ENCODE measurements at regions of chr4 and their contacts with region 1.

Region 1: DNA sequence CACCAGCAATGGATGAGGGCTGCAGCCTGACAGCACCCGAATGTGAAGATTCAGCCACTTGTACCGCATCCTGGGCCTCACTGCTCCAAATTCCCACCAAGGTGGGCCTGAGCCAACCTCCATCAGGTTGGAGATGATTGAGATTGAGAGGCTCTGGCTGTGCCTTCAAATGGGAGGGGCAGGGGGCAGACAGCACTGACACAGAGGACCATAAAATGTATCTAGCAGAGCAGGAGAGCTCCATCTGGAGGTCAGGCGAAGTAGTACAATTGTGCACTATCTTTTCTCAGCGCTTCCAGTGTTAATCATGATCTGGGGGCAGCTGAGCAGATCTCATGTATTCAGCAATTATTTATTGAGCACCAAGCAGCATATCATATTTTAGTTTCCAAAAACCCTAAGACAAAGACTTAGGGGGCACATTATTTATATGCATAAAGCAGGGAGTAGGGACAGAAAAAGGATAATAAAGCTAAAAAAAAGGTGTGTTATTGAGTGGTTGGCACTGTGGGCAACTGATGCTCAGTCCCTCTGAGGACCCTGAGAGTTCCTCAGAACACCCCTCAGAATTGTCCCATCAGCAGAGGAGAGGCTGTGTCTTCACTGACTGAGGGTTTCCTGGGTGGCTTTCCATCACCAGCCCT is 31.6 kb upstream of the C1QTNF7 start:
- DNase-seq: peak; percentile 67
- H3K4me3 Mint-ChIP-seq: no peak overlapping the region
- H3K27ac Mint-ChIP-seq: no peak overlapping the region
- H3K4me1 Mint-ChIP-seq: peaks cover 17% of the 10 kb centered on the region
- H3K27me3 Mint-ChIP-seq: no peaks in the 10 kb centered on the region

Region 2: DNA sequence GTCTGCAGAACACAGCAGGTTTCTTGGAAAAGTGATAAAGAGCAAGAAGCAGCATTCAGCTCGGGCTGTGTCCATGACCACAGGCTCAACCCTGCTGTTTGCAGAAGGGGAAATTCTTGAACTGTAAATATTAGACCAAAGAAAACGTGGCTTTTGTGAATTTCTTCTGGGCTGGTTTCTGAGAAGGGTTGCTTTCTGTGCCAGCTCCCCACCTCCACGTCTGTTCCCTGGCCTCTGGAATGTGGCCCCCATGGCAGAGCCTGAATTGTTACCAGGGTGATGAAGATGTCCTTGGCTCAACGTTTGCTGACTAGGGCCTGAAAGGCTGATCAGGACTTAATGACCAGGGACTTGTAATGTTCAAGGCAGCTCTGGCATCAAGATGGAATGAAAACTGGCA is 278.0 kb before region 1 on chr4:
- CTCF ChIA-PET with region 1: no interaction called
- POLR2A ChIA-PET with region 1: no interaction called
- intact Hi-C with region 1: no loop called
- DNase-seq: no peak
- H3K4me3 Mint-ChIP-seq: no peak overlapping the region
- H3K27ac Mint-ChIP-seq: no peak overlapping the region
- H3K4me1 Mint-ChIP-seq: peaks cover 10% of the 10 kb centered on the region
- H3K27me3 Mint-ChIP-seq: peaks cover 19% of the 10 kb centered on the region

Region 3: DNA sequence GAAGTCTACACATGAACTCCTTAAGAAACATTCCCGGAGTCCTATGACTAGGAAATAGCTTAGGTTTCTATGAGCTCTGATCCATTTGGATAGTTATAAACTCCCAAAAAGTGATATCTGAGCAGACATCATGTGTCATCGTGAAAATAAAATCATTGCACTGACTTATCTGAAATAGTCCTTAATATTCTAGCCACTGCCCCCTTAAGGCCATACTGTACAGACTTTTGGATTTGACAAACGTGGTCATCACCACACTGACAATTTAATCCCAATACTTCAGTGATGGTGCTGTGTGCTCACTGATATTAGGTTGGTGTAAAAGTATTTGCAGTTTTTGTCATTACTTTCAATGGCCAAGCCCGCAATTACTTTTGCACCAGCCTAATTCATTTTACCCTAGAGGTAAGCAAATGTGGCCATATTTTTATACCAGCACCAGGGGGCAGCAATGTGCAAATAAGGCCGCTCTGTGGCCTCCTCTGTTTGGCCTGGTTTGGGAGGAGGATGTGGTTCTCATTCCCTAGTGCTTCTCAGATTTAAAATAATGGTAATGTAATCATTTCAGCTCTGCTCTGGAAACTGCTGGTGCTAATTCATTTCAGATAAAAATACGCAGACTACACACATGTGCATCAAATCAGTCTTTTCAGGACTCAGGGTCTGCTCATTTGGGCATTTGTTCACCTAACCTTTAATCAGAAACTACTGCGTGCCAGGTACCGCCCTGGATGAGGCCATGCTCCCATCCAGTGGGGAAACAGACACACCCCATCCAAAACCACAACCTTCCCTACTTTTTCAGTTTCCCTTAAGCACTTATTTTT is 164.8 kb before region 1 on chr4:
- CTCF ChIA-PET with region 1: interaction called, 48 read pairs
- POLR2A ChIA-PET with region 1: no interaction called
- intact Hi-C with region 1: loop called (anchors 1 kb)
- DNase-seq: peak; percentile 81
- H3K4me3 Mint-ChIP-seq: no peak overlapping the region
- H3K27ac Mint-ChIP-seq: no peak overlapping the region
- H3K4me1 Mint-ChIP-seq: peaks cover 28% of the 10 kb centered on the region
- H3K27me3 Mint-ChIP-seq: no peaks in the 10 kb centered on the region

Region 4: GRCh38 chr4:15354371-15355297 is 41.6 kb before region 1 on chr4:
- CTCF ChIA-PET with region 1: interaction called, 10 read pairs
- POLR2A ChIA-PET with region 1: no interaction called
- intact Hi-C with region 1: no loop called
- DNase-seq: no peak
- H3K4me3 Mint-ChIP-seq: no peak overlapping the region
- H3K27ac Mint-ChIP-seq: no peak overlapping the region
- H3K4me1 Mint-ChIP-seq: no peaks in the 10 kb centered on the region
- H3K27me3 Mint-ChIP-seq: peaks cover 2% of the 10 kb centered on the region

Region 5: DNA sequence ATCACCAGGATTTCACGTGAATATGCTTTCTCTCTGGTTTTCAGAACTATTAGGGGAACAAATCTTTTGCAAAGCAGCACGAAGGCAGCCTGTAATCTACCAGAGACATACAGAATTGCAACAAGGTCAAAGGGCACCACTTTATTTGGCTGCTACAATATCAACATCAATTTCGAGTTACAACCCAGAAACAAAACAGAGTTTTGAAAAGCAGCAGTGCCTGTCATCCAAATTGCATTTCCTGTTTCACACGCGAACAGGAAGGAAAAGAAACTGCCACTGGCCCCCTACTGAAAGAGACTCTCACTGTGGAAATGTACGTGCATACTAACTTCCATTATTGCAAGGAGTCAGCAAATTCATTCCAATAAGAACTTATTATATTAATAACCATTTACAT is 14.5 kb after region 1 on chr4:
- CTCF ChIA-PET with region 1: interaction called, 31 read pairs
- POLR2A ChIA-PET with region 1: no interaction called
- intact Hi-C with region 1: loop called (anchors 1 kb)
- DNase-seq: peak; percentile 25
- H3K4me3 Mint-ChIP-seq: no peak overlapping the region
- H3K27ac Mint-ChIP-seq: no peak overlapping the region
- H3K4me1 Mint-ChIP-seq: peaks cover 29% of the 10 kb centered on the region
- H3K27me3 Mint-ChIP-seq: no peaks in the 10 kb centered on the region

Region 6: DNA sequence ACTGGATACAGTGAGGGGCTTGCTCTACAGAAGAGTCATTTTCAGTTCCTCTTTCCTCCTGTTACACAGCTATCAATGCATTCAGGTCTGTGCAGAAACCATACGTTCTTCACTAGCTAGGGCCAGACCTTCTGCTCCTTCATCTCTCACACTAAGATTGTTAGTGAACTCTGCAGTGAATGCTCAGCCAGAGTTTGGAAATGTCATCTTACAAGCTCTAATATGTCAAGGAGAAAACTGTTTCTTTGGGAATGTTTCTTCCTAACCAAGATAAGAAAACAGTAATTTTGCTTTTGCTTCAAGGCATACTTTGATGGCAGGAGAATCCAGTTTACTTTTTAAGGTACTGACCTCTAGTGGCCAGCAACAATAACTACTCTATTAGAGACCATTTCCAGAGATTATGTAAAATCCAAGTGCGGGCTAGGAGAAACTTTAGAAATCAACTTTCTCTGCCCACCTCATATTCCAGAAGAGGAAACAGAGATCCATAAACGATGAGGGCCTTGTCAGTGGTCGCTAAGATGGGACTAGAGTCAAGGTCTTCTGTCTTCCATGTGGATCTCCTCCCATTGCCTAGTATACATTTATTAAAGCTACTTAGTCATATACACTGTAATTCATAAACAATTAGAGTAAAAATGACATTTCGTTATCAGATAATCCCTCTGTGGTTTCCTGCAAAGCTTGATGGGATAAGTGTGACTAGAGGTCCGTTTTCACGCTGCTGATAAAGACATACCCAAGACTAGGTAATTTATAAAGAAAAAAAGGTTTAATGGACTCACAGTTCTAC is 61.3 kb after region 1 on chr4:
- CTCF ChIA-PET with region 1: interaction called, 20 read pairs
- POLR2A ChIA-PET with region 1: no interaction called
- intact Hi-C with region 1: loop called (anchors 1 kb)
- DNase-seq: no peak
- H3K4me3 Mint-ChIP-seq: no peak overlapping the region
- H3K27ac Mint-ChIP-seq: no peak overlapping the region
- H3K4me1 Mint-ChIP-seq: no peaks in the 10 kb centered on the region
- H3K27me3 Mint-ChIP-seq: peaks cover 3% of the 10 kb centered on the region

Region 7: DNA sequence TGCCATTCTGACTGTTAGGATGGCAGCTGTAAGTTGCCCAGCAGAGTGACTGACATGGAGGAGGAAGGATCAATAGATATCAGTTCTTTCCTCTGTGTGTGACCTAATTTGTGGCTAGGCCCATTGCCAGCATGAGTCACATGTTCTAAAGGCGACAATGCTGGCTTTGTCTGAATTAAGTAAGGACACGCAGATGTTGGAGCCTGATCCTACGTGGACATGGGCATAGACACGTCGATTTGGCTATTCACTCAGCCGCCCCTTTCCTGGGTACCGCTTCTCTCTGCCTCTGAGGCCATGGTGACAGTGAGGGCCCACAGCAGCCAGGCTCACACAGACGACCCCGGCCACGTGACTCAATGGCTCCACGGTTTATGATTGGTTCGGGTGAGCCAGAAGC is 671.2 kb after region 1 on chr4:
- CTCF ChIA-PET with region 1: no interaction called
- POLR2A ChIA-PET with region 1: no interaction called
- intact Hi-C with region 1: no loop called
- DNase-seq: no peak
- H3K4me3 Mint-ChIP-seq: no peak overlapping the region
- H3K27ac Mint-ChIP-seq: no peak overlapping the region
- H3K4me1 Mint-ChIP-seq: peaks cover 4% of the 10 kb centered on the region
- H3K27me3 Mint-ChIP-seq: peaks cover 26% of the 10 kb centered on the region

Region 8: GRCh38 chr4:16764622-16765021 is 1368.3 kb after region 1 on chr4:
- CTCF ChIA-PET with region 1: no interaction called
- POLR2A ChIA-PET with region 1: no interaction called
- intact Hi-C with region 1: no loop called
- DNase-seq: no peak
- H3K4me3 Mint-ChIP-seq: no peak overlapping the region
- H3K27ac Mint-ChIP-seq: no peak overlapping the region
- H3K4me1 Mint-ChIP-seq: no peaks in the 10 kb centered on the region
- H3K27me3 Mint-ChIP-seq: peaks cover 1% of the 10 kb centered on the region

Measured in activated CD4-positive, alpha-beta memory T cell treated with anti-CD3 and anti-CD28 coated beads for 36 hours (primary cell).